ENCODE measurements at regions of chr2 and their contacts with region 1.

Region 1: GRCh38 chr2:143171532-143172216 is 42.5 kb downstream of the ARHGAP15 start:
- DNase-seq: no peak
- H3K4me3 ChIP-seq: no peak overlapping the region
- H3K27ac ChIP-seq: no peak overlapping the region
- H3K4me1 ChIP-seq: no peaks in the 10 kb centered on the region
- H3K27me3 ChIP-seq: no peaks in the 10 kb centered on the region
- CTCF ChIP-seq: peak in 2 of 3 experiments; percentile 49 to 56; a peak in 2 of 4 replicates
- EP300 ChIP-seq: no peak
- POLR2A ChIP-seq: no peak
- RAD21 ChIP-seq: peak; percentile 63 to 69

Region 2: GRCh38 chr2:143051465-143051864 is 120.2 kb before region 1 on chr2:
- CTCF ChIA-PET with region 1: no interaction called
- POLR2A ChIA-PET with region 1: no interaction called
- DNase-seq: no peak
- H3K4me3 ChIP-seq: no peak overlapping the region
- H3K27ac ChIP-seq: no peak overlapping the region
- H3K4me1 ChIP-seq: no peaks in the 10 kb centered on the region
- H3K27me3 ChIP-seq: no peaks in the 10 kb centered on the region
- CTCF ChIP-seq: no peak
- EP300 ChIP-seq: no peak
- POLR2A ChIP-seq: no peak
- RAD21 ChIP-seq: no peak

Region 3: GRCh38 chr2:143183804-143184463 is 12.3 kb after region 1 on chr2:
- CTCF ChIA-PET with region 1: interaction called, 36 read pairs
- POLR2A ChIA-PET with region 1: no interaction called
- DNase-seq: no peak
- H3K4me3 ChIP-seq: no peak overlapping the region
- H3K27ac ChIP-seq: no peak overlapping the region
- H3K4me1 ChIP-seq: no peaks in the 10 kb centered on the region
- H3K27me3 ChIP-seq: no peaks in the 10 kb centered on the region
- CTCF ChIP-seq: no peak
- EP300 ChIP-seq: no peak
- POLR2A ChIP-seq: no peak
- RAD21 ChIP-seq: no peak

Region 4: GRCh38 chr2:143223556-143223955 is 51.9 kb after region 1 on chr2:
- CTCF ChIA-PET with region 1: interaction called, 18 read pairs
- POLR2A ChIA-PET with region 1: no interaction called
- DNase-seq: no peak
- H3K4me3 ChIP-seq: no peak overlapping the region
- H3K27ac ChIP-seq: no peak overlapping the region
- H3K4me1 ChIP-seq: no peaks in the 10 kb centered on the region
- H3K27me3 ChIP-seq: no peaks in the 10 kb centered on the region
- CTCF ChIP-seq: no peak
- EP300 ChIP-seq: no peak
- POLR2A ChIP-seq: no peak
- RAD21 ChIP-seq: no peak